ENCODE measurements at regions of chr4 and their contacts with region 1.

Region 1: DNA sequence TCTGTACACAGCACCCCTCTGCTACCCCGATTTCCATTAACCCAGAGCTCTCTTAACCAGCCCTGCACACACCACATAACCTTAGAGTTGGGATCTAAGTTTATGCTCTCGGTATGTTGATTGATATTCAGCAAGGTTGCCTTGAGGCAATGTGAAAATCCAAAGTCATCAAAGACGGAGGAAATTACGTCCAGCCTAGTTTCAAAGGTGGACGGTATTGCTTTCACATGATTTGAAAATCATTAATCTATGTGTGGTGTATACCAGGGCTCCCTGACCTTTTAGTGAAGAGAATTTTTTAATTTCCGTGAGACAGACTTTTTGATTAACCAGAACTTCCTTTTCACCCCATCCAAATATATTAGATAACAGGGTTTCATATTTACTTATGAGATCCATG is 272.5 kb upstream of the LCORL start:
- DNase-seq: no peak
- ATAC-seq: no peak
- H3K4me3 ChIP-seq: no peak overlapping the region
- H3K4me3 Mint-ChIP-seq: no peak overlapping the region
- H3K27ac ChIP-seq: no peak overlapping the region
- H3K27ac Mint-ChIP-seq: no peak overlapping the region
- H3K4me1 ChIP-seq: no peaks in the 10 kb centered on the region
- H3K4me1 Mint-ChIP-seq: no peaks in the 10 kb centered on the region
- H3K27me3 ChIP-seq: no peaks in the 10 kb centered on the region
- H3K27me3 Mint-ChIP-seq: no peaks in the 10 kb centered on the region
- CTCF ChIP-seq: no peak

Region 2: GRCh38 chr4:18138076-18138665 is 155.8 kb before region 1 on chr4:
- CTCF ChIA-PET with region 1: no interaction called
- POLR2A ChIA-PET with region 1: no interaction called
- intact Hi-C with region 1: no loop called
- DNase-seq: no peak
- ATAC-seq: no peak
- H3K4me3 ChIP-seq: no peak overlapping the region
- H3K4me3 Mint-ChIP-seq: no peak overlapping the region
- H3K27ac ChIP-seq: no peak overlapping the region
- H3K27ac Mint-ChIP-seq: no peak overlapping the region
- H3K4me1 ChIP-seq: no peaks in the 10 kb centered on the region
- H3K4me1 Mint-ChIP-seq: no peaks in the 10 kb centered on the region
- H3K27me3 ChIP-seq: peaks cover 0 to 3% (median 0%) of the 10 kb centered on the region in 4 experiments
- H3K27me3 Mint-ChIP-seq: peaks cover 5% of the 10 kb centered on the region
- CTCF ChIP-seq: no peak

Region 3: GRCh38 chr4:18214411-18215055 is 79.5 kb before region 1 on chr4:
- CTCF ChIA-PET with region 1: no interaction called
- POLR2A ChIA-PET with region 1: no interaction called
- intact Hi-C with region 1: no loop called
- DNase-seq: no peak
- ATAC-seq: no peak
- H3K4me3 ChIP-seq: no peak overlapping the region
- H3K4me3 Mint-ChIP-seq: no peak overlapping the region
- H3K27ac ChIP-seq: no peak overlapping the region
- H3K27ac Mint-ChIP-seq: no peak overlapping the region
- H3K4me1 ChIP-seq: no peaks in the 10 kb centered on the region
- H3K4me1 Mint-ChIP-seq: no peaks in the 10 kb centered on the region
- H3K27me3 ChIP-seq: no peaks in the 10 kb centered on the region
- H3K27me3 Mint-ChIP-seq: peaks cover 4% of the 10 kb centered on the region
- CTCF ChIP-seq: no peak

Region 4: DNA sequence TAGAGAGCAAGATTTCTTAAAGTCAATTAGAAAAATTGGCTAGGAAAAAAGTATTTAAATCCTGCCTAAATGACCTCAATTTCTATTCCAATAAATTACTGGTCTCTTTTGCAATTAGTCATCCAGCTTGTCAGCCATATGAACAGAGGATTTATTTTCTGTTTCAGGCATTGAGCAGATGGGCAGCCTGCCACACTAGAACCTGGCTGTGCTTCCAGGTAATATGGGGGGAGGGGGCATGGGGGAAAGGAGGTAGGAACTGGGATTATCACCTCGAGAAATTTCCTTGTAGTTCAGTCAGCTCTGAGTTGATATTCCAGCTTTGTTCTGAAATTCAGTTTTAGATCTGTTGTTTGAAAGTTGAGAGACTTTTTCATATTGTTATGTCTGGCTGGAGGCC is 66.1 kb before region 1 on chr4:
- CTCF ChIA-PET with region 1: no interaction called
- POLR2A ChIA-PET with region 1: no interaction called
- intact Hi-C with region 1: loop called (anchors 2 kb)
- DNase-seq: no peak
- ATAC-seq: no peak
- H3K4me3 ChIP-seq: no peak overlapping the region
- H3K4me3 Mint-ChIP-seq: no peak overlapping the region
- H3K27ac ChIP-seq: no peak overlapping the region
- H3K27ac Mint-ChIP-seq: no peak overlapping the region
- H3K4me1 ChIP-seq: no peaks in the 10 kb centered on the region
- H3K4me1 Mint-ChIP-seq: no peaks in the 10 kb centered on the region
- H3K27me3 ChIP-seq: peaks cover 0 to 2% (median 0%) of the 10 kb centered on the region in 4 experiments
- H3K27me3 Mint-ChIP-seq: peaks cover 5% of the 10 kb centered on the region
- CTCF ChIP-seq: no peak